ENCODE measurements at regions of chr13 and their contacts with region 1.

Region 1: GRCh38 chr13:33362986-33363727 is 77.6 kb upstream of the STARD13 start:
- DNase-seq: no peak
- ATAC-seq: no peak
- H3K4me3 ChIP-seq: no peak overlapping the region
- H3K27ac ChIP-seq: no peak overlapping the region
- H3K4me1 ChIP-seq: peaks cover 15% of the 10 kb centered on the region
- H3K27me3 ChIP-seq: no peaks in the 10 kb centered on the region
- CTCF ChIP-seq: no peak
- EP300 ChIP-seq: no peak
- POLR2A ChIP-seq: no peak
- RAD21 ChIP-seq: no peak

Region 2: DNA sequence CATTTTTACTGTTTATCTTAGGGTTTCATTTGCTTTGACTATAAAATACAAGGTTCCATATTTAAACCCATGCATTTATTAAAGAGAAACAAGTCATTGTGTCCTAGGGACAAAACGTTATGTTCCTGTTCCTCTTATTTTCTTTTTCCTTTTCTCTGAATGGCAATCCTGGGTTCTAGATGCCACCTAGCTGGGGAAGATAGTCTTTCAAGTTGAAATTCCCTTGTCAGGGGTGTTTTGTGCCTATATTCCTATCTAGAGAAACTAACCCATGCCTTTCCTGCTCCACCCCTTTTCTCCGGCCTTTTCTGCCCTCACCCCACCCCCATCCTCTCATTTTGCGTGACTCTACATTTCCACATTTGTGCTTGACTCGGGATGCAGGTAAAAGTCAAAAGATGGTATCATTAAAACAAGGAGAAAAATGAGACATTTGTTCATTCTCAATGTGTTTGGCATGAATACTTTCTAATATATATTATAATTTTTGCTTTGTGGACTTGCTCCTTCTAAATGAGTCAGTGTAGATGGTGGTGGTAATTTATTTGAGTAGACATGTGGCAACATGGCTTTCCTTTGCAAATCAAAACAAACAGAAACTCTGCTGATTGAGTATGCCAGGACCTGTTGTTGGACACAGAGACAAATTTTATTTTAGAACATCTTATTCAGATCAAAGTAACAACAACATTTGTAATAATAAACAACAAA is 50.9 kb before region 1 on chr13:
- CTCF ChIA-PET with region 1: no interaction called
- POLR2A ChIA-PET with region 1: no interaction called
- in situ Hi-C with region 1: loop called (anchors 5 kb)
- intact Hi-C with region 1: no loop called
- DNase-seq: peak; percentile 14
- ATAC-seq: no peak
- H3K4me3 ChIP-seq: no peak overlapping the region
- H3K27ac ChIP-seq: no peak overlapping the region
- H3K4me1 ChIP-seq: no peaks in the 10 kb centered on the region
- H3K27me3 ChIP-seq: no peaks in the 10 kb centered on the region
- CTCF ChIP-seq: peak; percentile 49
- EP300 ChIP-seq: no peak
- POLR2A ChIP-seq: no peak
- RAD21 ChIP-seq: 0 out of 2 replicates have a peak, but pooled peaks have one; percentile 8

Region 3: DNA sequence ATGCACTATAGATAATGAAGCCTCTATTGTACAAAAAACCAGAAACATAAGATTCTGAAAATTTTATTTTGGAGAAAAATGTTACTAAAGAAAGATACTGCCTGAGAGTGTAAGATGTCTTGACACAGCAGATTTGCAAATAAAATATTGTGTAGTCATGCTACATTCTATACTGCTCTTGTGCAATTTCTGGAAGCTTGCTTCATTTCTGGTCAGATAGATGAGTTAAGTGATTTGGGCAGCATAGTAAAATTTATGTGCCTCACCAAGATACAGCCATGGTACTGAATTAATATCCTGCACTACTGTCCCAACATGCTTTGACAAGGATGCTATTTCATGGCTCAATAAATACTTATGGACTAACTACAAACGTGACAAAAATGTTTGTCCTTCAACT is 22.5 kb before region 1 on chr13:
- CTCF ChIA-PET with region 1: no interaction called
- POLR2A ChIA-PET with region 1: no interaction called
- in situ Hi-C with region 1: no loop called
- intact Hi-C with region 1: no loop called
- DNase-seq: no peak
- ATAC-seq: no peak
- H3K4me3 ChIP-seq: no peak overlapping the region
- H3K27ac ChIP-seq: no peak overlapping the region
- H3K4me1 ChIP-seq: no peaks in the 10 kb centered on the region
- H3K27me3 ChIP-seq: no peaks in the 10 kb centered on the region
- CTCF ChIP-seq: no peak
- EP300 ChIP-seq: no peak
- POLR2A ChIP-seq: no peak
- RAD21 ChIP-seq: no peak

Region 4: GRCh38 chr13:33497146-33497845 is 134.1 kb after region 1 on chr13:
- CTCF ChIA-PET with region 1: no interaction called
- POLR2A ChIA-PET with region 1: no interaction called
- in situ Hi-C with region 1: no loop called
- intact Hi-C with region 1: no loop called
- DNase-seq: no peak
- ATAC-seq: no peak
- H3K4me3 ChIP-seq: no peak overlapping the region
- H3K27ac ChIP-seq: no peak overlapping the region
- H3K4me1 ChIP-seq: peaks cover 12% of the 10 kb centered on the region; the same call in 1 of the 2 replicates
- H3K27me3 ChIP-seq: no peaks in the 10 kb centered on the region
- CTCF ChIP-seq: no peak
- EP300 ChIP-seq: no peak
- POLR2A ChIP-seq: no peak
- RAD21 ChIP-seq: no peak